H1 (cell line): ENCODE measurements at regions of chr11 and their contacts with region 1.

Region 1: GRCh38 chr11:102341844-102342318 is 5.1 kb upstream of the BIRC2 start:
- DNase-seq: peak in 1 of 2 experiments; percentile 75
- H3K4me3 ChIP-seq: no peak overlapping the region
- H3K27ac ChIP-seq: no peak overlapping the region
- H3K4me1 ChIP-seq: peaks cover 0 to 4% (median 1%) of the 10 kb centered on the region in 4 experiments; a peak in 2 of 7 replicates
- H3K27me3 ChIP-seq: no peaks in the 10 kb centered on the region
- CTCF ChIP-seq: peak; percentile 35 to 92 (median 81)
- EP300 ChIP-seq: no peak
- POLR2A ChIP-seq: no peak
- RAD21 ChIP-seq: peak; percentile 89 to 91

Region 2: GRCh38 chr11:102214623-102215022 is 127.3 kb before region 1 on chr11:
- CTCF ChIA-PET with region 1: no interaction called
- POLR2A ChIA-PET with region 1: no interaction called
- DNase-seq: no peak
- H3K4me3 ChIP-seq: no peak overlapping the region
- H3K27ac ChIP-seq: no peak overlapping the region
- H3K4me1 ChIP-seq: peaks cover 0 to 7% (median 2%) of the 10 kb centered on the region in 4 experiments; a peak in 1 of 7 replicates
- H3K27me3 ChIP-seq: no peaks in the 10 kb centered on the region
- CTCF ChIP-seq: no peak
- EP300 ChIP-seq: no peak
- POLR2A ChIP-seq: no peak
- RAD21 ChIP-seq: no peak

Region 3: DNA sequence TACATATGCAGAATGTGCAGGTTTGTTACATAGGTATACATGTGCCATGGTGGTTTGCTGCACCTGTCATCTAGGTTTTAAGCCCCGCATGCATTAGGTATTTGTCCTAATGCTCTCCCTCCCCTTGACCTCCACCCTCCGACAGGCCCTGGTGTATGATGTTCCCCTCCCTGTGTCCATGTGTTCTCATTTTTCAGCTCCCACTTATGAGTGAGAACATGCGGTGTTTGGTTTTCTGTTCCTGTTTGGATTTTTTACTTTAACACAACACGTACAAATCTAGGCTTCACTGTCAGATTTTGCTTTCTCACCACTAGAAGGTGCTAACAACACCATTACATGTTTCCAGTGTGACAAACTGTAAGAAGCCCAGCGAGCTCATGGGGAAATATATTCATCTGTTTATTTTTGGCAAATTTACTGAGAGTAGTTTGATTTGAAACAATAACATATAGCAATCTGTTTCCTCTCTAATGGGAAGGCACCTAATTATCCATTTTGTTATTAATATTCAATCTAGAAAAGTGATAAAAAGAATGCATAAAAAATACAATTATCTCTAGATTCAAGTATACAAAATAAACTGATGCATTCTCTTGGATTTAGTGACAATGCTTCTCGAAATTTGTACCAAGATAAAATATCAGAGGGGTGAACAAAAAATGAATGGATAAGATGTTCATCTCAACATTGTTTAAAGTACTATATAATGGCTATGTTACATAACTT is 47.8 kb before region 1 on chr11:
- CTCF ChIA-PET with region 1: interaction called, 12 read pairs
- POLR2A ChIA-PET with region 1: no interaction called
- DNase-seq: no peak
- H3K4me3 ChIP-seq: no peak overlapping the region
- H3K27ac ChIP-seq: no peak overlapping the region
- H3K4me1 ChIP-seq: peaks cover 0 to 5% (median 0%) of the 10 kb centered on the region in 4 experiments; a peak in 2 of 7 replicates
- H3K27me3 ChIP-seq: no peaks in the 10 kb centered on the region
- CTCF ChIP-seq: peak in 2 of 3 experiments; percentile 46 to 73; a peak in 2 of 4 replicates
- EP300 ChIP-seq: no peak
- POLR2A ChIP-seq: no peak
- RAD21 ChIP-seq: peak; percentile 52 to 55

Region 4: DNA sequence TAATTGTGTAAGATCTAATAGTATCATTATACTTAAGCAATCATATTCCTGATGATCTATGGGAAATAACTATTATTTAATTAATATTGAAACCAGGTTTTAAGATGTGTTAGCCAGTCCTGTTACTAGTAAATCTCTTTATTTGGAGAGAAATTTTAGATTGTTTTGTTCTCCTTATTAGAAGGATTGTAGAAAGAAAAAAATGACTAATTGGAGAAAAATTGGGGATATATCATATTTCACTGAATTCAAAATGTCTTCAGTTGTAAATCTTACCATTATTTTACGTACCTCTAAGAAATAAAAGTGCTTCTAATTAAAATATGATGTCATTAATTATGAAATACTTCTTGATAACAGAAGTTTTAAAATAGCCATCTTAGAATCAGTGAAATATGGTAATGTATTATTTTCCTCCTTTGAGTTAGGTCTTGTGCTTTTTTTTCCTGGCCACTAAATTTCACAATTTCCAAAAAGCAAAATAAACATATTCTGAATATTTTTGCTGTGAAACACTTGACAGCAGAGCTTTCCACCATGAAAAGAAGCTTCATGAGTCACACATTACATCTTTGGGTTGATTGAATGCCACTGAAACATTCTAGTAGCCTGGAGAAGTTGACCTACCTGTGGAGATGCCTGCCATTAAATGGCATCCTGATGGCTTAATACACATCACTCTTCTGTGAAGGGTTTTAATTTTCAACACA is 18.2 kb before region 1 on chr11:
- CTCF ChIA-PET with region 1: interaction called, 10 read pairs
- POLR2A ChIA-PET with region 1: interaction called, 3 read pairs
- DNase-seq: no peak
- H3K4me3 ChIP-seq: no peak overlapping the region
- H3K27ac ChIP-seq: no peak overlapping the region
- H3K4me1 ChIP-seq: no peaks in the 10 kb centered on the region
- H3K27me3 ChIP-seq: no peaks in the 10 kb centered on the region
- CTCF ChIP-seq: no peak
- EP300 ChIP-seq: no peak
- POLR2A ChIP-seq: no peak
- RAD21 ChIP-seq: no peak

Region 5: DNA sequence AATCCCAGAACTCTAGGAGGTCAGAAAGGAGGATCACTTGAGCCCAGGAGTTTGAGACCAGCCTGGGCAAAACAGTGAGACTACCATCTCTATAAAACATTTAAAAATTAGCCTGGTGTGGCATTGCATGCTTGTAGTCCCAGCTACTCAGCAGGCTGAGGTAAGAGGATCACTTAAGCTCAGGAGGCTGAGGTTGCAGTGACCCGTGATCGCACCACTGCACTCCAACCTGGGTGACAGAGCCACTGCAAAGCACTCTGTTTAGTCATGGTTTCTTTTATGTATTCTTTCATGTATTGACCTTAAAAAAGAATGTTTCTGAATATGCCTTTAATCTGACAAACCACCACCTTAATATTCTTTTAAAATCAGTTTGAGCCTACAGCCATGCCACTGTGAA is 57.3 kb after region 1 on chr11:
- CTCF ChIA-PET with region 1: no interaction called
- POLR2A ChIA-PET with region 1: no interaction called
- DNase-seq: no peak
- H3K4me3 ChIP-seq: no peak overlapping the region
- H3K27ac ChIP-seq: no peak overlapping the region
- H3K4me1 ChIP-seq: no peaks in the 10 kb centered on the region
- H3K27me3 ChIP-seq: no peaks in the 10 kb centered on the region
- CTCF ChIP-seq: no peak
- EP300 ChIP-seq: no peak
- POLR2A ChIP-seq: no peak
- RAD21 ChIP-seq: no peak

Region 6: DNA sequence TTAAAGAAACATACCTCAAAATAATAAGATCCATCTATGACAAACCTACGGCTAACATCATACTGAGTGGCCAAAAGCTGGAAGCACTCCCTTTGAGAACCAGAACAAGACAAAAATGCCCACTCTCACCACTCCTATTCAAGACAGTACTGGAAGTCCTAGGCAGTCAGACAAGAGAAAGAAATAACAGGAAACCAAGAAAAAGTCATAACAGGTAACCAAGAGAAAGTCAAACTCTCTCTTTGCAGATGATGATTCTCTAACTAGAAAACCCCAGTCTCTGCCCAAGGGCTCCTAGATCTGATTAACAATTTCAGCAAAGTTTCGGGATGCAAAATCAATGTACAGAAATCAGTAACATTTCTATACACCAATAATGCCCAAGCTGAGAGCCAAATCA is 75.1 kb after region 1 on chr11:
- CTCF ChIA-PET with region 1: no interaction called
- POLR2A ChIA-PET with region 1: no interaction called
- DNase-seq: no peak
- H3K4me3 ChIP-seq: no peak overlapping the region
- H3K27ac ChIP-seq: no peak overlapping the region
- H3K4me1 ChIP-seq: no peaks in the 10 kb centered on the region
- H3K27me3 ChIP-seq: no peaks in the 10 kb centered on the region
- CTCF ChIP-seq: no peak
- EP300 ChIP-seq: no peak
- POLR2A ChIP-seq: no peak
- RAD21 ChIP-seq: no peak

Region 7: GRCh38 chr11:102488208-102488607 is 146.3 kb after region 1 on chr11:
- CTCF ChIA-PET with region 1: interaction called, 20 read pairs
- POLR2A ChIA-PET with region 1: no interaction called
- DNase-seq: no peak
- H3K4me3 ChIP-seq: no peak overlapping the region
- H3K27ac ChIP-seq: no peak overlapping the region
- H3K4me1 ChIP-seq: no peaks in the 10 kb centered on the region
- H3K27me3 ChIP-seq: no peaks in the 10 kb centered on the region
- CTCF ChIP-seq: no peak
- EP300 ChIP-seq: no peak
- POLR2A ChIP-seq: no peak
- RAD21 ChIP-seq: no peak

Region 8: DNA sequence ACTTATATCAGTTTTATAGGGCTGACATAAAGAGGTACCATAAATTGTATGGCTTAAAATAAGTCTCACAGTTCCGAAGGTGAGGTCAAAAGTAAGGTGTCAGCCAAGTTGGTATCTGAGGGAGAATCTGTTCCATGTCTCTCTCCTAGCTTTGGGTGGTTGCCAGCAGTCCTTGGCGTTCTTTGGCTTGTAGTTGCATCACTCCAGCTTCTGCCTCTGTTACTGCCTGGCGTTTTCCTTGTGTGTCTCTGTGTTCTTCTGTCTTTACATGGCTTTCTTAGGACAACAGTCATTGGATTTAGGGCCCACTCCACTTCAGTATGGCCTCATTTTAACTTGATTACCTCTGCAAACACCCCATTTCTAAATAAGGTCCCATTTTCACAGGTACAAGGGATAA is 172.0 kb after region 1 on chr11:
- CTCF ChIA-PET with region 1: interaction called, 18 read pairs
- POLR2A ChIA-PET with region 1: no interaction called
- DNase-seq: no peak
- H3K4me3 ChIP-seq: no peak overlapping the region
- H3K27ac ChIP-seq: no peak overlapping the region
- H3K4me1 ChIP-seq: no peaks in the 10 kb centered on the region
- H3K27me3 ChIP-seq: no peaks in the 10 kb centered on the region
- CTCF ChIP-seq: no peak
- EP300 ChIP-seq: no peak
- POLR2A ChIP-seq: no peak
- RAD21 ChIP-seq: no peak